ENCODE measurements at regions of chr20 and their contacts with region 1.

Region 1: DNA sequence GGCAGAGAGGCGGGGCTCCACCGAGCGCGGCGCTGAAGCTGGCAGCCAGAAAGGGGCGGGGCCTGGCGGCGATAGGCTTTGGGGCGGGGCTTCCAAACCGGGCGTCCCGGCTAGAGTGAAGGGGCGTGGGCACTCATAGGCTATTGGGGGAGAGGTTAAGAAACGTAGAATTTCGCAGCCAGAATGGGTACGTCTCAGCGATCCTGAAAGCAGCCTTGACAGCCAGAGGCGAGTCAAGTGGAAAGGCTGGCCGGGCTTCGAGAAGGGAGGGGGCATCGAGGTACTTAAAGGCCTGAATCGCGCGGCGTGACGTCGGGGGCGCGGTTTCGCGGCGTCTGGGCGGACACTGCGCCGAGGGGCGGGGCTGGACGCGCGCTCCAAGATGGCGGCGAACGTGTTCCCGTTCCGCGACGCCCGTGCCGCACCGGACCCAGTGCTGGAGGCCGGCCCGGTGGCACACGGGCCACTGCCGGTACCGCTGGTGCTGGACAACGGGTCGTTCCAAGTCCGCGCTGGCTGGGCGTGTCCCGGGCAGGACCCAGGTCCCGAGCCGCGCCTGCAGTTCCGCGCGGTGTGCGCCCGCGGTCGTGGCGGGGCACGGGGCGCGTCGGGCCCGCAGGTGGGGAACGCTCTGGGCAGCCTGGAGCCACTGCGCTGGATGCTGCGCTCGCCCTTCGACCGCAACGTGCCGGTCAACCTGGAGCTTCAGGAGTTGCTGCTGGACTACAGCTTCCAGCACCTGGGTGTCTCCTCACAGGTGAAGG is at the start of gene ACTR5:
- DNase-seq: peak; percentile 98
- ATAC-seq: peak; percentile 92
- H3K4me3 Mint-ChIP-seq: peak within 1 kb of the TSS; percentile 91
- H3K27ac Mint-ChIP-seq: peak within 1 kb of the TSS; percentile 98
- H3K4me1 Mint-ChIP-seq: peaks cover 22% of the 10 kb centered on the region
- H3K27me3 Mint-ChIP-seq: no peaks in the 10 kb centered on the region
- total RNA-seq, gene ACTR5: 6.3 to 8.4 TPM

Region 2: DNA sequence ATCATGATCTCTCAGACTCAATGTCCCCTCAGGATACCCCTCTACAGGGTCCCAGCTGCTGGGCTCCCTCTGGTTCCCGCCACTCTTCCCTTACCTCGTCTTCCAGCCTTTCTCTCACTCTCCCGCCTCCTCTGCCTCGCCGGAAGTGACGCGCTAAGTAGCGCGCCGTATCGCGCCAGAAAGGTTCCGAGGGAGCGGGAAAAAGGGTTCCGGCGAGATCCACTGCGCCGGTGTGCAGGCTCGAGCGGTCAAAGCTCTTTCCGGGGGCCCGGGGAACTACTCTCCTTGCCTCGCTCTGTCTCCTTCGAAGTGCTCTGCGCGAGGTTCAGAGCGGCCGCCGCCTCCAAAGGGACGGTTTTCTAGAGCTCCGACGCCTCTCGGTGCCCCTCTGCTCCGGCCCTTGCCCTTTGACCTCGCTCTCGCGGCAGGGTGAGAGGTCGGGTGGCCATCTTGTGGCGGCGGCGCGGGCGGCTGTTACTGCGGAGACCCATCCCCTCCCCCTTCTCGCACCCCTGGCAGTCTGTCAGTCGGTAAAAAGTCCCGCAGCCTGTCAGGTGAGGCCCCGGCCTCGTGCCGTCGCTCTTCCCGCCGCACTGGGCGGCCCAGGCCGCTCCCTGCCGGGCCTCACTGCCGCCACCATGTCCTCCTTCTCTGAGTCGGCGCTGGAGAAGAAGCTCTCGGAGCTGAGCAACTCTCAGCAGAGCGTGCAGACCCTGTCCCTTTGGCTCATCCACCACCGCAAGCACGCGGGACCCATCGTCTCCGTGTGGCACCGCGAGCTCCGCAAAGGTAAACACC is 714.8 kb before region 1 on chr20 and contains the starts of genes RPRD1B and TTI1:
- CTCF ChIA-PET with region 1: no interaction called
- POLR2A ChIA-PET with region 1: no interaction called
- intact Hi-C with region 1: loop called in 1 of 2 experiments (anchors 2 kb)
- DNase-seq: peak; percentile 93
- ATAC-seq: peak; percentile 85
- H3K4me3 Mint-ChIP-seq: peak within 1 kb of the TSS; percentile 94
- H3K27ac Mint-ChIP-seq: peak within 1 kb of the TSS; percentile 98
- H3K4me1 Mint-ChIP-seq: peaks cover 65% of the 10 kb centered on the region
- H3K27me3 Mint-ChIP-seq: no peaks in the 10 kb centered on the region
- total RNA-seq, gene RPRD1B: 29.9 to 36.4 TPM
- total RNA-seq, gene TTI1: 35.6 to 36.7 TPM

Region 3: GRCh38 chr20:38472513-38473372 is 275.5 kb before region 1 on chr20 and contains the start of gene RALGAPB:
- CTCF ChIA-PET with region 1: no interaction called
- POLR2A ChIA-PET with region 1: no interaction called
- intact Hi-C with region 1: loop called in 1 of 2 experiments (anchors 1 kb)
- DNase-seq: peak; percentile 99
- ATAC-seq: peak; percentile 96
- H3K4me3 Mint-ChIP-seq: peak within 1 kb of the TSS; percentile 85
- H3K27ac Mint-ChIP-seq: peak within 1 kb of the TSS; percentile 79
- H3K4me1 Mint-ChIP-seq: peaks cover 38% of the 10 kb centered on the region
- H3K27me3 Mint-ChIP-seq: no peaks in the 10 kb centered on the region
- total RNA-seq, gene RALGAPB: 23.5 to 27.1 TPM

Region 4: GRCh38 chr20:38674092-38674764 is 74.1 kb before region 1 on chr20:
- CTCF ChIA-PET with region 1: interaction called, 3 read pairs
- POLR2A ChIA-PET with region 1: no interaction called
- intact Hi-C with region 1: loop called in 1 of 2 experiments (anchors 1 kb)
- DNase-seq: peak; percentile 84
- ATAC-seq: peak; percentile 91
- H3K4me3 Mint-ChIP-seq: peak overlapping the region; percentile 63
- H3K27ac Mint-ChIP-seq: peak overlapping the region; percentile 49
- H3K4me1 Mint-ChIP-seq: peaks cover 5% of the 10 kb centered on the region
- H3K27me3 Mint-ChIP-seq: peaks cover 12% of the 10 kb centered on the region

Region 5: DNA sequence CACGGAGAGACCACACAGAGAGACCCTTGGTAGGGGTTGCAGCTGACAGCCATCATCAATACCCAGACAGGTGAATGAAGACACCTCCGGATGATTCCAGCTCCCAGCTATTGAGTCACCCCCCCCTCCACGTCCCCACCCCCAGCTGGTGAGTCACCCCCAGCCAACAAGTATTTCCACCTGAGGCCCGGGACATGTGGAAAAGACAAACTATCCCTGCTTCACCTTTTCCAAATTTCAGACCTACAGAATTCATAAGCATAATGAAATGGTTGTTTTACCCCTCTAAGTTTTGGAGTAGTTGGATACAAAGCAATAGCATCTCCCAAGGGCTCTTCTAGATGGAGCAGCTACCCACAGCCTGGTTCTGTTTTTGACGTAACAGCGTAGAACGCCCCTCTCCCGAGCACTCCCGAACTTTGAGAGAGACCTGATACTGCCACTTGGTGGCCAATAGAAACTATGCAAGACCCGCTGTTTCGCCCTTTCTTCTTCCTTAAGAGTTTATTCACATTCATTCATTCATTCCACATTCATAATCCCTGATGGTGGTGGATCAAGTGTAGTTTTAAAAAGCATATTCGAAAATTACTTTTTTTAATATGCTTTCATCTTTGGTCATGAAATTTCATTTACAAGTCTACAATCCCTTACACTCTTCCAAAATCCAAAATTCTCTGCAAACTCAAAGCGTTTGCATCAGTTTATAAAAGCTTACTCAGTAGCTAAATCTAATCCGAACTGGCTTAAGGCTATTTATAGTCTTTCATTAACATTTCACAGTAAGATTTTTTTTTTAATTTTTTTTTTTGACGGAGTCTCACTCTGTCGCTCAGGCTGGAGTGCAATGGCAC is 42.1 kb after region 1 on chr20:
- CTCF ChIA-PET with region 1: interaction called, 10 read pairs
- POLR2A ChIA-PET with region 1: no interaction called
- intact Hi-C with region 1: no loop called
- DNase-seq: peak; percentile 79
- ATAC-seq: peak; percentile 90
- H3K4me3 Mint-ChIP-seq: peak overlapping the region; percentile 13
- H3K27ac Mint-ChIP-seq: no peak overlapping the region
- H3K4me1 Mint-ChIP-seq: peaks cover 17% of the 10 kb centered on the region
- H3K27me3 Mint-ChIP-seq: no peaks in the 10 kb centered on the region

Region 6: GRCh38 chr20:38875175-38875993 is 127.1 kb after region 1 on chr20:
- CTCF ChIA-PET with region 1: no interaction called
- POLR2A ChIA-PET with region 1: no interaction called
- intact Hi-C with region 1: loop called in 1 of 2 experiments (anchors 1 kb)
- DNase-seq: peak; percentile 65
- ATAC-seq: peak; percentile 17
- H3K4me3 Mint-ChIP-seq: peak overlapping the region; percentile 63
- H3K27ac Mint-ChIP-seq: peak overlapping the region; percentile 96
- H3K4me1 Mint-ChIP-seq: peaks cover 89% of the 10 kb centered on the region
- H3K27me3 Mint-ChIP-seq: no peaks in the 10 kb centered on the region

Region 7: DNA sequence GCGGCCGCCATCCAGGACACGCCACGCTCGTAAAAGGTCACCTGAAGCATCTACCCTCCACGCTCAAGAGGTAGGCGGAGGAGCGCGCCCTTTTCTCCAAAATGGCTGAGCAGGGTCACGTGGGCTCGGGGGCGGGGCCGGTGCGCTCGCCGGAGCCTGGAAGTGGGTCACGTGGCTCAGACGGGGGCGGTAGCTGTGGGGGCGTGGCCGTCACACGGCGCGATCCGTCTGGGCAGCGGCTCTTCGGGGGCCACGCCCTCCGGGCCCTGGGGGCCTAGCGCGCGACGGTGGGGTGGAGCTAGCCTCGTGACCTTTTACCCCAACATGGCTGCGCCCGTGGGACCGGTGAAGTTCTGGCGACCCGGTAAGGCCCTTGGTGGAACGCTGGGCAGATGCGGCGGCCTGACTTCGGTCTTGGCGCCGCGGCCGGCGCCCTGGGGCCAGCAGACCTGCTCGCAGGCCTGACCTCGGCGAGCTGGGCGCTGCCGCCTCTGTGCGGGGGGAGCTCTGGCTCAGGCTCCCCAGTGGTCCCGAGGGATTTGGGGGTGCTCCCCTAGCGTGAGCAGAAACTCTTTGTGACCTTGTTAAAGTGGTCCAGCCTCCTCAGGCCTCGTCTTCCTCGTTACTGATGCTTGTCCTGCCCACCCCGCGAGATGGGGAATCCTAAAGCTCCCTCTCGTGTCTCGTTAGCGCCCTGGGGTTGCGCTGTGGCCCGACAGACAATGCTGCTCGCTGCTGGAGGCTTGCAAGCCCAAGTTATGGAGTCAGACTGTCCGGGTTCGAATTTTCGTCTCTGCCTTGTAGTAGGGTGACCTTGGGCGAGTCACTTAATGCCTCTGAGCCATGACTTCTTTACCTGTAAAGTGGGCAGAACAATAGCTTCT is 214.0 kb after region 1 on chr20 and contains the start of gene DHX35:
- CTCF ChIA-PET with region 1: interaction called, 3 read pairs
- POLR2A ChIA-PET with region 1: no interaction called
- intact Hi-C with region 1: loop called in 1 of 2 experiments (anchors 1 kb)
- DNase-seq: peak; percentile 99
- ATAC-seq: peak; percentile 99
- H3K4me3 Mint-ChIP-seq: peak within 1 kb of the TSS; percentile 94
- H3K27ac Mint-ChIP-seq: peak within 1 kb of the TSS; percentile 95
- H3K4me1 Mint-ChIP-seq: peaks cover 29% of the 10 kb centered on the region
- H3K27me3 Mint-ChIP-seq: no peaks in the 10 kb centered on the region
- total RNA-seq, gene DHX35: 8.7 to 12.0 TPM

Region 8: GRCh38 chr20:38997622-38998021 is 249.3 kb after region 1 on chr20:
- CTCF ChIA-PET with region 1: no interaction called
- POLR2A ChIA-PET with region 1: no interaction called
- intact Hi-C with region 1: no loop called
- DNase-seq: peak; percentile 83
- ATAC-seq: peak; percentile 89
- H3K4me3 Mint-ChIP-seq: no peak overlapping the region
- H3K27ac Mint-ChIP-seq: peak overlapping the region; percentile 19
- H3K4me1 Mint-ChIP-seq: peaks cover 28% of the 10 kb centered on the region
- H3K27me3 Mint-ChIP-seq: no peaks in the 10 kb centered on the region

Measured in activated CD4-positive, alpha-beta T cell treated with anti-CD3 and anti-CD28 coated beads for 36 hours (primary cell).